ENCODE measurements at regions of chr17 and their contacts with region 1.

Region 1: DNA sequence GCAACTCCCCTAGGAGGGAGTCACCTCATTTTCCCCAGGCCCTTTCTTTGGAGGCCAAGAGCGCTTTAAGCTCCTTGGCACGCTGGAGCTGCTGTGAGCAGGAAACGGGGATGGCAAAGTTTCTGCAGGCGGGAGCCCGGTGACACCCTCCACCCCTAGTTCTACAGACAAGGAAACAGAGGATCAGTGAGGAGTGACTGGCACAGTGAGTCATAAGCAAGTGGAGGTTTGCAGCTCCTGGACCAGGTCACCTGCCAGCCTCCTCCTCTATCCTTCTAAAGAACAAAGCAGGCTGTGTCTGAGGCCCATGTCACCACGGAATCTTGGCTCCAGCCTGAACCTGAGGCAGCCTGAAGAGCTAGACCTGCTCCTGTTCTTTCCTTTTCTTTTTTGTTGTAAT is 141.9 kb downstream of the TMEM132E start:
- DNase-seq: no peak
- H3K4me3 ChIP-seq: no peak overlapping the region
- H3K27ac ChIP-seq: no peak overlapping the region
- H3K4me1 ChIP-seq: no peaks in the 10 kb centered on the region
- H3K27me3 ChIP-seq: no peaks in the 10 kb centered on the region
- CTCF ChIP-seq: no peak
- EP300 ChIP-seq: no peak
- POLR2A ChIP-seq: no peak

Region 2: GRCh38 chr17:34645594-34645993 is 75.7 kb before region 1 on chr17:
- intact Hi-C with region 1: no loop called
- DNase-seq: no peak
- H3K4me3 ChIP-seq: no peak overlapping the region
- H3K27ac ChIP-seq: no peak overlapping the region
- H3K4me1 ChIP-seq: no peaks in the 10 kb centered on the region
- H3K27me3 ChIP-seq: no peaks in the 10 kb centered on the region
- CTCF ChIP-seq: no peak
- EP300 ChIP-seq: no peak
- POLR2A ChIP-seq: no peak

Region 3: DNA sequence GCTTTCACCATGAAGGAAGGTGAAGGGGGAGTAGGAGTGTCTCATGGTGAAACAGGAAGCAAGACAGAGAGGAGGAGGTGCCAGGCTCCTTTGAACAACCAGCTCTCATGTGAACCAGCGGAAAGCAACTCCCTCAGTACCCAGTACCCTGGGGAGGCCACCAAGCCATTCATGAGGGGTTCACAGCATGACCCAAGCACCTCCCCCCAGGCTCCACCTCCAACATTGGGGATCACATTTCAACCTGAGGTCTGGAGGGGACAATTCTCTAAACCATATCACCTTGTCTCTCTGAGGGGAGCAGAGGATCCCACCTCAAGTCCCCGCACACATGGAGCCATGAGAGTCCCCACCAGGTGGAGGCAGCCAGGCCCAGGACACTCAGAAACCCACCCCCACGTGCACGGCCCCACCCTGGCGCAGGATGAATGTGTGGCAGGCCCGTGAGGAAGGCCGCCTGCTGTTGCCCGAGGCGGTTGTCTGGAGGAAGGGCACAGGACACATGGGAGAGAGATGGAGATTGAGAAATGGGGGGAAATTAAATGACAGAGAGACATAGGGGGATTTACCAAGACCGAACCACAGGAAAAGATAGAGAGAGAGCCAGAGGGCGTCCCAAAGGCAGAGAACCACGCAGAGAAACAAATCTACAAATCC is 56.0 kb before region 1 on chr17:
- intact Hi-C with region 1: loop called in 1 of 4 experiments (anchors 10 kb)
- DNase-seq: no peak
- H3K4me3 ChIP-seq: no peak overlapping the region
- H3K27ac ChIP-seq: no peak overlapping the region
- H3K4me1 ChIP-seq: no peaks in the 10 kb centered on the region
- H3K27me3 ChIP-seq: no peaks in the 10 kb centered on the region
- CTCF ChIP-seq: no peak
- EP300 ChIP-seq: no peak
- POLR2A ChIP-seq: no peak